Mammary epithelial cell (primary cell): ENCODE measurements at regions of chr13 and their contacts with region 1.

Region 1: GRCh38 chr13:26985285-26985878 is 186.2 kb downstream of the USP12 start:
- DNase-seq: peak; percentile 62
- H3K4me3 ChIP-seq: no peak overlapping the region
- H3K27ac ChIP-seq: no peak overlapping the region
- H3K4me1 ChIP-seq: no peaks in the 10 kb centered on the region
- H3K27me3 ChIP-seq: peaks cover 3% of the 10 kb centered on the region
- CTCF ChIP-seq: peak; percentile 70 to 72

Region 2: GRCh38 chr13:27043013-27043412 is 57.6 kb after region 1 on chr13:
- CTCF ChIA-PET with region 1: no interaction called
- dilution Hi-C with region 1: no loop called
- in situ Hi-C with region 1: no loop called
- intact Hi-C with region 1: no loop called
- DNase-seq: peak; percentile 87
- H3K4me3 ChIP-seq: no peak overlapping the region
- H3K27ac ChIP-seq: peak overlapping the region; percentile 3
- H3K4me1 ChIP-seq: peaks cover 12% of the 10 kb centered on the region
- H3K27me3 ChIP-seq: no peaks in the 10 kb centered on the region
- CTCF ChIP-seq: no peak

Region 3: GRCh38 chr13:27171827-27172494 is 186.6 kb after region 1 on chr13:
- CTCF ChIA-PET with region 1: no interaction called
- dilution Hi-C with region 1: no loop called
- in situ Hi-C with region 1: no loop called
- intact Hi-C with region 1: loop called (anchors 1 kb)
- DNase-seq: peak; percentile 88
- H3K4me3 ChIP-seq: peak overlapping the region; percentile 61 to 76 (median 74)
- H3K27ac ChIP-seq: peak overlapping the region; percentile 54
- H3K4me1 ChIP-seq: peaks cover 15% of the 10 kb centered on the region
- H3K27me3 ChIP-seq: no peaks in the 10 kb centered on the region
- CTCF ChIP-seq: peak in 1 of 2 donors; percentile 22

Region 4: DNA sequence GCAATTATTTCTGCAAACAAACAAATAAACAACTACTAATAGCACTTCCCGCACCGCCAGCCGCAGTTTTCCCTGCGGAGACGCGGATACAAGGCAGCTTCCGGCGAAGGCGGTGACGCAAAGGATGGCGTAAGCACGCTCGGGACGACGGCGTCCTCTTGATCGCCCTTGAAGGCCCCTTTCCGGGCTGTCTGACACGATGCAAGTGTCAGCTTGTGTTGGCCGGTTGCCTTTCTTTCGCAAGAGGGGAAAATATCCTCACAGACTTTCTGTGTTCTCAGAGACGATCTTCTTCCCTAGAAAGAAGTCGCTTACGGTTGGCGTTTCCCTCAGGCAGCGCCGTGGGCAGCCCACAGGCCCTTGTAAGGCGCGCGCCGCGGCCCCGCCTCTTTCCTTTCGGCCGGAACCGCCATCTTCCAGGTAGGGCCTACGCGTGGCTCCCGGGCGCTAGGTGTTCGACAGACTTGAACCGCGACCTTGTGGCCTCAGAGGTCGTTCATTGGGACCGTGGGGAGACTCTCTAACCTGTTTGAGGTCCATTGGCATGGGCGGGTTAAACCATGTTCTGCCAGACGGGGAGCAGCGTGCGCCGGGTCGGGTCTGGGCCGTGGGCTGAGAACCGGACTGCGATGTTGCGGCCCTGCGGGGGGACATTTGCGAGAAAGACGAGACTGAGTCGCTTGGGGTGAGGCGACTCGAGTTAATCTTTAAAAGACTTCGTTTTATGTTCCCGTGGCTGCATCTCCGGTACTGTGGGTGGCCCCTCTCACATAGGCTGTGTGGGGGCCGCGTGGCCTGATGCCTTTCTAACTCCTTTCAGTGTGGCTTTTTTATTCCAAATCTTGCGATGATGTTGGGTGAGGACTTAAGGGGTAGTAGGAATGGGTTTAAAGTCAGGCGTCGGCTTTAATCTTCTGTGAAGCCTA is 266.0 kb after region 1 on chr13 and contains the start of gene RPL21:
- CTCF ChIA-PET with region 1: no interaction called
- dilution Hi-C with region 1: no loop called
- in situ Hi-C with region 1: no loop called
- intact Hi-C with region 1: loop called (anchors 2 kb)
- DNase-seq: peak; percentile 88
- H3K4me3 ChIP-seq: peak within 1 kb of the TSS; percentile 77 to 97 (median 84)
- H3K27ac ChIP-seq: peak within 1 kb of the TSS; percentile 94
- H3K4me1 ChIP-seq: peaks cover 9% of the 10 kb centered on the region
- H3K27me3 ChIP-seq: no peaks in the 10 kb centered on the region
- CTCF ChIP-seq: no peak
- total RNA-seq, gene RPL21: 422 to 818 TPM

Region 5: GRCh38 chr13:27362064-27362883 is 376.9 kb after region 1 on chr13:
- CTCF ChIA-PET with region 1: interaction called, 6 read pairs
- dilution Hi-C with region 1: no loop called
- in situ Hi-C with region 1: loop called (anchors 5 kb)
- intact Hi-C with region 1: loop called (anchors 1 kb)
- DNase-seq: peak; percentile 68
- H3K4me3 ChIP-seq: peak overlapping the region; percentile 26 to 42 (median 42)
- H3K27ac ChIP-seq: no peak overlapping the region
- H3K4me1 ChIP-seq: peaks cover 5% of the 10 kb centered on the region
- H3K27me3 ChIP-seq: no peaks in the 10 kb centered on the region
- CTCF ChIP-seq: peak; percentile 91 to 95

Region 6: GRCh38 chr13:27997904-27998522 is 1012.6 kb after region 1 on chr13:
- CTCF ChIA-PET with region 1: no interaction called
- dilution Hi-C with region 1: no loop called
- in situ Hi-C with region 1: loop called (anchors 25 kb)
- intact Hi-C with region 1: no loop called
- DNase-seq: peak; percentile 36
- H3K4me3 ChIP-seq: no peak overlapping the region
- H3K27ac ChIP-seq: no peak overlapping the region
- H3K4me1 ChIP-seq: no peaks in the 10 kb centered on the region
- H3K27me3 ChIP-seq: no peaks in the 10 kb centered on the region
- CTCF ChIP-seq: peak; percentile 43 to 59